ENCODE measurements at regions of chr17 and their contacts with region 1.

Region 1: DNA sequence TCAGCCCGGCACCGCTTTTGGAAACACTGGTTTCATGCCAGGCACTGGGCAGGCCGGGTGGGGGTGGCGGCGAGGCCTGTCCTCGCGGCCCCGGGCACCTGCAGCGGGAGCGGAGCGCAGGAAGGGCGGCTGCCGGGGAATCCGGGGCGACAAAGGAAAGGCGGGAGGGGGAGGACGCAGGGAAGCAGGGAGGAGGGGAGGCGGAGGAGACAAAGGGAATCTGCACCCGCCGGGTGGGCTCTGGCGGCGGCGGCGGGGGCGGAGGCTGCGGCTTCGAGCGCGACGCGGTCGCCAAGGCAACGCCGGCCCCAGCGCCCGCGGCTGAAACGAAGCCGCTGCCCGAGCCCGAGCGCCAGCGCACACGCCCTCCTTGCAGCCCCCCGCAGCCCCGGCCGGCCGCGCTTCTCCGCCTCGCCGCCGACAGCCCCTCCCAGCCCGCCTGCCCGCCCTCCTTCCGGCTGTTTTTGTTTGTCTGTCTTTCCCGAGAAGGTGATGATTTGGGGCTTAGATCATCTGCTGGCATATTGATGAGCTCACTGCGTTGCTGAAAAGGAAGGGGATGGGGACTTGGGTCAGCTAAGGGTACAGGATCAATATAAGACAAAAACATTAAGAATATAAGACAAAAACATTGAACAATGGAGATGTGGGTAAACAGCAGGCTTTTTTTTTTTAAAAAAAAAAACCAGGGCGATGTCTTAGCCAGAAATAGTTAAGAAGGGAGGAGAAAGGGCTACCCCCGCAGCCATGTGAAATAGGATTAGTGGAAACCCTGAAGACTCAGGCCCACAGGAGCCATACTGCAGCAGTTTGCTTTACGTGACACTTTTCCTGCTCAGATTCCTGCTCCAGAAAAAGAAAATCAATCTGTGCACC is 32.7 kb downstream of the CDK5R1 start:
- DNase-seq: peak; percentile 85
- H3K4me3 Mint-ChIP-seq: peak overlapping the region; percentile 66
- H3K27ac Mint-ChIP-seq: peak overlapping the region; percentile 95
- H3K4me1 Mint-ChIP-seq: peaks cover 72% of the 10 kb centered on the region
- H3K27me3 Mint-ChIP-seq: no peaks in the 10 kb centered on the region

Region 2: GRCh38 chr17:32486111-32486700 is 33.3 kb before region 1 on chr17:
- CTCF ChIA-PET with region 1: interaction called, 8 read pairs
- POLR2A ChIA-PET with region 1: interaction called, 36 read pairs
- DNase-seq: peak; percentile 67
- H3K4me3 Mint-ChIP-seq: peak overlapping the region; percentile 63
- H3K27ac Mint-ChIP-seq: no peak overlapping the region
- H3K4me1 Mint-ChIP-seq: peaks cover 42% of the 10 kb centered on the region
- H3K27me3 Mint-ChIP-seq: no peaks in the 10 kb centered on the region

Region 3: DNA sequence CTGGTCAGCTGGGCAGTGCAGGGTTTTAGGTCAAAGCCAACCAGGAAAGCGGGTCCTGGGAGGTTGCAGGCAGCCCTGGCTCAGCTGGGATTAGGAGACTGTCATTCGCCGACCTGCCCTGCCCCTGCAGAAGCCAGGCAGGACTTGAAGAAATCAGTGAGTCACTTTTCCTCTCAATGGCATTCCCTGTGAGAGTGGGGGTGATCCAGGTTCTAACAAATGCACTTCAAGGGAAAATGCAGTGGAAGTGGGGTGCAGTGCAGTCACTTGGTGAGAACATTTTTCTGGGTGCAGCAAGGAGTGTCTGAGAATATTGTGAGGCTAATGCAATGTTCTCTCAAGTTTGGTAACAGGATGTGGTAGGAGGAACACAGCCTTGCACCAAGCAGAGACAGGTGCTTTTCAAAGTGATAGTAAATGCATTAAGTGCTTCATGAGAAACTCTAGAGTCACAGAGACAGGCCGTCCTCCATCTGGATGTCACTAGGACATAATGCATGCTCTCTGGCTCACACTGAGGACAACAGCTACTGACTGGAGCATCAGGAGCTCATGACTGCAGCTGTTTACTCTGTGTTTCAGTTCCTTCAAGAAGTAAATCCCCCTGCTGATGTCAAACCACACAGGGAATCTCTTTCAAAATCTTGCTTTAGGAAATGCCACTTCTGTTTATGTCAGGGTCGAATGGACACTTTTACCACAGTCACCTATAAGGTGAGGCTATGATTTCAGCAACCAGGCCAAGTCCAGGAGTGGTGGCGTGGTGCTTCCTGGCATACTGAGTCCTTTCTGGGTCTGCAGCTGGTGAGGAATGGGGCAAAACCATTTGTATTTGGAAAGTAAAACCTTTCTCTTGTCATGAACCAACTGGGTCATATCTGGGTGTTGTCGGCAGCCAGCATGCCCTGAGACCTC is 16.0 kb before region 1 on chr17:
- CTCF ChIA-PET with region 1: interaction called, 4 read pairs
- POLR2A ChIA-PET with region 1: interaction called, 21 read pairs
- DNase-seq: peak; percentile 67
- H3K4me3 Mint-ChIP-seq: peak overlapping the region; percentile 59
- H3K27ac Mint-ChIP-seq: peak overlapping the region; percentile 100
- H3K4me1 Mint-ChIP-seq: peaks cover 42% of the 10 kb centered on the region
- H3K27me3 Mint-ChIP-seq: no peaks in the 10 kb centered on the region

Region 4: GRCh38 chr17:32551186-32551955 is 31.9 kb after region 1 on chr17:
- CTCF ChIA-PET with region 1: interaction called, 8 read pairs
- POLR2A ChIA-PET with region 1: interaction called, 14 read pairs
- DNase-seq: peak; percentile 37
- H3K4me3 Mint-ChIP-seq: peak overlapping the region; percentile 16
- H3K27ac Mint-ChIP-seq: peak overlapping the region; percentile 84
- H3K4me1 Mint-ChIP-seq: peaks cover 54% of the 10 kb centered on the region
- H3K27me3 Mint-ChIP-seq: no peaks in the 10 kb centered on the region

Region 5: DNA sequence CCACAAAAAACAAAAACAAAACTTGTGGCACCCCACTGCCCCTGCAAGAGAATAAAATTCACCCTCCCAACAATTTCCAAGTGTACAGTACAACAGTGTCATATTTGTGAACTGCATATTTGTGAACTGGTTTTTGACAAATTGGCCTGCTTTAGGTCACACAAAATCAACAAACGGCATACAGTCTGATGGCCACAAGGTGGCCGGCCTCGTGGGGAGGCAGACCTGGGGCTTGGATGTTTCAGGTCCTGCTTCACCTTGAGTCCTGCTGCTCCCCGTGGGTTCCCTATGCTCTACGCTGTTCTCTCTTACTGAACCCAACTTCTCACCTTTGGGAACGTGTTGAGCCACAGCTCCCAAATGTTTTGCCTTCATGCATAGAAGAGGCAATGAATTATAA is 69.5 kb after region 1 on chr17:
- CTCF ChIA-PET with region 1: no interaction called
- POLR2A ChIA-PET with region 1: no interaction called
- DNase-seq: no peak
- H3K4me3 Mint-ChIP-seq: no peak overlapping the region
- H3K27ac Mint-ChIP-seq: no peak overlapping the region
- H3K4me1 Mint-ChIP-seq: no peaks in the 10 kb centered on the region
- H3K27me3 Mint-ChIP-seq: no peaks in the 10 kb centered on the region

Measured in activated CD4-positive, alpha-beta memory T cell treated with anti-CD3 and anti-CD28 coated beads, Interleukin-2, amount 10 ng/mL, durations not matched to agents 7 days and 5 days (primary cell).